IMR-90 (cell line): ENCODE measurements at regions of chr21 and their contacts with region 1.

Region 1: DNA sequence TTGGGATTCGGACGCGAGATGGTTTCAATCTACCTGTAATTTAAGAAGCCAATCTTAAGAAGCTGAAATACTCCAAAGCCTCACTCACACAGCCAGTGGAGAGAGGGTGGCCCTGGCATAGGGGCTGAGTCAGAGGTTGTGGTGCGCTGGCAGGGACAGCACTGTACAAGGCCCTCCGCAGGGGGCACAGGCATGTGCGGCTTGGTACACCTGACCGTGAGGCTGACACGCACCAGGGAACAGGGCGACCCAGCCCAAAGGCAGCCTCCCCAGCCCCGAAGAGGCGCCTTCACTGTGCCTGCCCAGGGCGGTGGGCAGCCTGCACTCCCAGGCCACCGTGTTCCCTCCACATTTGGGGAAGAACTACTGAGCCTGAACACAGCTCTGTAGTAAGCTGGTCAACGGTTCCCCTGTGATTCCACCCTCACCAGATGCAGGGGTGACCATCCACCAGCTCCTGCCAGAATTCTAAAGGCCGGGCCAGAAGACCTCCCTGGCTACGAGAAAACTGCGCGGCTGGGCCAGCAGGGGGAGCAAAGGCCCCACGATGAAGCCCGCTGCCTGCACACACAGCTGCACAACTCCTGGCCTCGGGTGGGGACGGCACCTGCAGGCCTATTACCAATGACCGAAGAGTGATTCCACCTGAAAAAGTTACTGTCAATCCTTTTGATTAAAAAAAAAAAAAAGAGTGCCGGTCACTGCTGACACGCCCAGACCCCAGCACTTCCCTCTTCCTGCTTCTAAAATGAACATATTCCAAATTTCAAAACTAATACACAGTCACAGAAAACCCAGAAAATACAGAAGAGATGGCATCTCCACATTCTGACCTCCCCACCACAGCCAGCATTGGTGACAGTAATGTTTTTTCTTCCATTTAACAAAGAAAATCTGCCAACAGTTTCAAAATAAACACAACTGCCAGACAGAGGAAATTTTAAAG is 49.6 kb upstream of the RIPK4 start:
- DNase-seq: peak; percentile 46
- ATAC-seq: peak; percentile 84
- H3K4me3 ChIP-seq: no peak overlapping the region
- H3K27ac ChIP-seq: no peak overlapping the region
- H3K4me1 ChIP-seq: no peaks in the 10 kb centered on the region
- H3K27me3 ChIP-seq: no peaks in the 10 kb centered on the region
- CTCF ChIP-seq: peak; percentile 75
- POLR2A ChIP-seq: no peak
- RAD21 ChIP-seq: peak; percentile 76

Region 2: DNA sequence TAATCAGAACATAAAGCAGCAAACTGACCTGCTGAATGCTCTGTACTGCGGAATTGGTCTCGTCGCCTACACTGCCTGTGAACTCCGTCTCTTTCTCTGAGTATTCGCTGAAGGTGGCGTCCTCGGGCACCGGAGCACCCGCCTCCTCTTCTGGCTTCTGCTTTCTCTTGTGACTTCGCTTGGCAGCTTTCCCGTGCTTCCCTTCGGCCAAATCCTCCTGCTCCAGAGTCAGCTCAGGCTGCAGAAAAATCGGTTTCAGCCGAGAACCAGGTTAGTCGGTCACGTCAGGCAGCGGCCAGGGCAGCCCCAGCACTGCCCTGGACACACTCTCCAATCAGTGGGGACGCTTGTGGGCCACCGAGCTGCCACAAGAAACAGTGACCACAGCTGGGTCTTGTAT is 13.8 kb before region 1 on chr21:
- CTCF ChIA-PET with region 1: no interaction called
- POLR2A ChIA-PET with region 1: no interaction called
- dilution Hi-C with region 1: no loop called
- in situ Hi-C with region 1: no loop called
- intact Hi-C with region 1: no loop called
- DNase-seq: no peak
- ATAC-seq: no peak
- H3K4me3 ChIP-seq: no peak overlapping the region
- H3K27ac ChIP-seq: no peak overlapping the region
- H3K4me1 ChIP-seq: no peaks in the 10 kb centered on the region
- H3K27me3 ChIP-seq: no peaks in the 10 kb centered on the region
- CTCF ChIP-seq: no peak
- POLR2A ChIP-seq: no peak
- RAD21 ChIP-seq: no peak

Region 3: DNA sequence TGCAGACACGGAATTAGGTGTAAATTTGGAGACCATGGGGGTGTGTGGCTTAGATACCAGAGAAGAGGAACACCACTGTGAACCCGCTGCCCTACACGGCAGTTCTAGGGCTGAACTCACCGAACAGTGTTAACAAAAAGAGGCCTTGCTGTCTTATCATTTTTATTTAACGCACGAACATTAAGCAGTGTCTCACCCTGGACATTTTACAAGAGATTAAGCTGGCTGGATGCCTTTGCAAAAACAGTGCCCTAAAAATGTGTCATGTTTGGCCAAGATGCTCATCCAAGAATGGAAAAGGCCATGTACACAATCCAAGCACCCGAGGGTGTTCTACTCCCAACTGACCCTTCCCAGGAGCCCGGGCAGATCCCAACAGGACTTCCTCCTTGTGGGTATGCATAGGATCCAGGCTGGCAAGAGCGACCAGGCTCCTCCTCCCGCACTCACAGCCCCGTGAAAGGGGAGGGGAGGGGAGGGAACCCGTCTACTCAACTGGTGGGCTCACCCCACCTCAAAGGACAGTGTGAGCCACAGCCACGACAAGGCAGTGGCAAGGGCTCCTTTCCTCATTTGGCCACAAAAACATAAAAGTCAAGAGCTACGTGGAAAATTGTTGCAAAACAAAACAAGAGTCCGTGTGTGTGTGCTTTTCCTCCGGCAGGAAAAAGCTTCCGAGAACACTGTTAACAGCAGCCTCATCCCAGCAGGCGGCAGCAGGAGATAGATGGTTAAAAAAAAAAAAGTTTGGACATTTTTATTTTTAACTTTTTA is 117.0 kb after region 1 on chr21:
- CTCF ChIA-PET with region 1: interaction called, 10 read pairs
- POLR2A ChIA-PET with region 1: no interaction called
- dilution Hi-C with region 1: no loop called
- in situ Hi-C with region 1: no loop called
- intact Hi-C with region 1: loop called (anchors 1 kb)
- DNase-seq: peak; percentile 56
- ATAC-seq: peak; percentile 22
- H3K4me3 ChIP-seq: peak overlapping the region; percentile 19
- H3K27ac ChIP-seq: peak overlapping the region; percentile 69
- H3K4me1 ChIP-seq: peaks cover 19% of the 10 kb centered on the region
- H3K27me3 ChIP-seq: no peaks in the 10 kb centered on the region
- CTCF ChIP-seq: peak; percentile 54
- POLR2A ChIP-seq: no peak
- RAD21 ChIP-seq: peak; percentile 47

Region 4: GRCh38 chr21:42107881-42108553 is 291.5 kb after region 1 on chr21:
- CTCF ChIA-PET with region 1: interaction called, 3 read pairs
- POLR2A ChIA-PET with region 1: no interaction called
- dilution Hi-C with region 1: no loop called
- in situ Hi-C with region 1: no loop called
- intact Hi-C with region 1: loop called (anchors 2 kb)
- DNase-seq: peak; percentile 65
- ATAC-seq: peak; percentile 98
- H3K4me3 ChIP-seq: no peak overlapping the region
- H3K27ac ChIP-seq: no peak overlapping the region
- H3K4me1 ChIP-seq: peaks cover 3% of the 10 kb centered on the region; the same call in 1 of the 2 replicates
- H3K27me3 ChIP-seq: peaks cover 8% of the 10 kb centered on the region; the same call in 1 of the 2 replicates
- CTCF ChIP-seq: peak; percentile 82
- POLR2A ChIP-seq: no peak; the same call in 1 of the 2 replicates
- RAD21 ChIP-seq: peak; percentile 88